Right cardiac atrium (tissue), 5 donors: ENCODE measurements at regions of chr12 and their contacts with region 1.

Region 1: GRCh38 chr12:104201238-104202001 is 14.2 kb upstream of the TXNRD1 start:
- DNase-seq: no peak
- ATAC-seq: peak; percentile 81 to 86
- H3K4me3 ChIP-seq: no peak overlapping the region
- H3K27ac ChIP-seq: no peak overlapping the region
- H3K4me1 ChIP-seq: no peaks in the 10 kb centered on the region
- H3K27me3 ChIP-seq: no peaks in the 10 kb centered on the region

Region 2: DNA sequence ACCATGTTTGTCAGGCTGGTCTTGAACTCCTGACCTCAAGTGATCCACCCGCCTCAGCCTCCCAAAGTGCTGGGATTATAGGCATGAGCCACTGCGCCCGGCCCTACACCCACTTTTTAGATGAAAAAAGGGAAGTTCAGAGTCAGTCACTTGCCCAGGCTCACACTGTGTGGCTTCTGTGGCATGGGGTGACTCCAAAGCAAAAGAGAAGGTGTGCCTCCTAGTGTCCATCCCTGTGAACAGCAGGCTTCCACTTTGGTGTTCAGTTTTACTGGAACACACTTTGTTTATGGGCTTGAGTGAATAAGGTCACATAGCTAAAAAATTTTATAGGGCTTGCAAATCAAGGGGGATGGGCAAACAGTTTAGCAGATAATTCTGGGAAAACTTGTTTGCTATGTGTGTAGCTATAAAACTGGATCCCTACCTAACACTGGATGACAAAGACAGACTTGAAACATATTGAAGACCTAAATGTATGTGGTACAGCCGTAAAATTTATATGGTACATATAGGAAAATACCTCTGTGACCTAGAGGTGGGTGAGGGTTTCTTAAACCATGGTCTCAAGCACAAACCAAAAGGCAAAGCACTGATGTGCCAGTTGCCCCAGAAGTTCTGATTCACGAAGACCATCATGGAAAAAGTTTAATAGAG is 157.1 kb after region 1 on chr12:
- intact Hi-C with region 1: loop called (anchors 2 to 10 kb)
- DNase-seq: peak; percentile 54 to 78 (median 58)
- ATAC-seq: peak; percentile 71 to 72
- H3K4me3 ChIP-seq: no peak overlapping the region
- H3K27ac ChIP-seq: no peak overlapping the region
- H3K4me1 ChIP-seq: no peaks in the 10 kb centered on the region
- H3K27me3 ChIP-seq: no peaks in the 10 kb centered on the region

Region 3: DNA sequence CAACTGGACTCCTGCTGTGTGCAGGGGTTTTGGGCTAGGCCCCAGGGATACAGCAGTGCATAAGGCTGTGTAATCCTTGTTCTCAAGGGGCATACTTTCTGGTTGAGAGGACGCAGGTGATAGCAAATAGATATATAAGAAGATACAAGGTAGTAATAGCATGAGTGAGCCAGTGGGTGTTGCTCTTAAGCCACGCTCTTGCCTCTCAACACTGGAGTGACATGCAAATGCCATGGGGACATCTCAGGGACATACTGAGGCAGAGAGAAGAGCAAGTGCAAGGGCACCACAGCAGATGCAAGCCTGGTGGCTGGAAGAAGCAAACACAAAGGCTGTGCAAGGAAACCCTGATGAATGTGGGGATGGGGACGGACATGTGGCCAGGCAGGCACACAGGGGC is 478.6 kb after region 1 on chr12:
- intact Hi-C with region 1: no loop called
- DNase-seq: peak in 1 of 3 donors; percentile 24
- ATAC-seq: no peak
- H3K4me3 ChIP-seq: no peak overlapping the region
- H3K27ac ChIP-seq: no peak overlapping the region
- H3K4me1 ChIP-seq: peaks cover 3% of the 10 kb centered on the region
- H3K27me3 ChIP-seq: no peaks in the 10 kb centered on the region